Head of caudate nucleus (tissue), 42 donors: ENCODE measurements at regions of chr21 and their contacts with region 1.

Region 1: GRCh38 chr21:39867198-39867650 is at the start of gene PCP4:
- DNase-seq: peak; percentile 63 to 96 (median 85)

Region 2: GRCh38 chr21:39204134-39204533 is 663.1 kb before region 1 on chr21:
- intact Hi-C with region 1: no loop called
- DNase-seq: no peak

Region 3: DNA sequence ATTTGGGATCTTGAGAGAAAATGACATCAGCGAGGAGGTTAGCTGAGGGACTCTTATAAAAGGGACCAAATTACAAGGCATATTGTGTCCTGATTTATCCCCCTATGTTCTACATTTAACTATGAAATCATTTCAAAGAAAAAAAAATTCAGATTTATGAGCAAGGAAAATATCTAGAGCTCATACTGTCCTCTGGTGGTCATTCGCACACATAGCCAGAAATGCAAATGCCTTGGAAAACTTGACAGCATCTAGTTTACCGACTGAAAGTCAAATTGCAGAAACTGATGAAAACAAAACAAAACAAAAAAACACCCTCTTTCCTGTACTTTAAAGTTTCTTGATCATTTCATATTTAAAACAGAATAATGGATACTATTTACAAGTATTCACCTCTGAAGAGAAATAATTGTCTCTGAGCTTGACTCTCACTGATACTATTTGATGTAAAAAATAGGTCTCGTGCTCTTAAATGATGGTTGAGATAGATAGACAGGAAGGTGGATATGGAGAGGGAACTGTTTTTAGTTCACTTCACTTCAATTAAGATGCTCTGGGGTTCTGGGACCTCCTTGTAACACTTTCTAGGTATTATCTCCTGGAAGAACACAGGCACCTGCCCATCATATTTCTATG is 253.8 kb after region 1 on chr21:
- intact Hi-C with region 1: loop called (anchors 10 kb)
- DNase-seq: peak in 3 of 42 donors; percentile 16 to 38 (median 21)